ENCODE measurements at regions of chr1 and their contacts with region 1.

Region 1: DNA sequence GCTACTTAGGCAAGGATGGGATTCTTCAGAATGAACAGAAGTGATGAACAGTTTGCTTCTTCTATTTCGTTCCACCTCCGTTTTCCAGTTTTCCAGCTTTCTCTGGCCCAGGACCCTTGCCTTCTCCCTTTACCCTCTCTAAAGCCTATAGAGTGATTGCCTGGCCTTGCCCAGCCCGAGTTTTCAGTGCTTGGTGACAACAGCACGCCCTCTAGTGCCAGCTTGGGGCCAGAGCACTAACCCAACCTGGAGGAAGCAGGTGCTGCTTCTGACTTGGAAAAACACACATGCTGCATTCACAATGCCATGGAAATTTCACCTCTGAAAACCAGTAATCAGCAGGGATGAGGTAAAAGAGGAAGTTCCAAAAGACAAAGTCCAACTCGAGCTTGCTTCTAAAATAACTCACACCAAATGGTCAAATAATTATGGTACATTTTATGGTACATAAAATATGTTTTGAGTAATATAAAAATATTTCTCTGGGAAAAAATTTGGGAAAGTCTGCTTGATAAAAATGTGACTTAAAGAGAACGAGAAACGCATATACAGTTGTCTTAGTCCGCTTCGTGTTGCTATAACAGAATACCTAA is 26.1 kb downstream of the UBE2T start:
- DNase-seq: peak; percentile 63
- H3K4me3 Mint-ChIP-seq: no peak overlapping the region
- H3K27ac Mint-ChIP-seq: no peak overlapping the region
- H3K4me1 Mint-ChIP-seq: peaks cover 4% of the 10 kb centered on the region
- H3K27me3 Mint-ChIP-seq: peaks cover 14% of the 10 kb centered on the region

Region 2: GRCh38 chr1:201774224-201774982 is 541.3 kb before region 1 on chr1:
- intact Hi-C with region 1: no loop called
- DNase-seq: no peak
- H3K4me3 Mint-ChIP-seq: no peak overlapping the region
- H3K27ac Mint-ChIP-seq: no peak overlapping the region
- H3K4me1 Mint-ChIP-seq: no peaks in the 10 kb centered on the region
- H3K27me3 Mint-ChIP-seq: peaks cover 11% of the 10 kb centered on the region

Region 3: GRCh38 chr1:201916649-201917249 is 398.9 kb before region 1 on chr1:
- intact Hi-C with region 1: no loop called
- DNase-seq: no peak
- H3K4me3 Mint-ChIP-seq: no peak overlapping the region
- H3K27ac Mint-ChIP-seq: no peak overlapping the region
- H3K4me1 Mint-ChIP-seq: no peaks in the 10 kb centered on the region
- H3K27me3 Mint-ChIP-seq: peaks cover 11% of the 10 kb centered on the region

Region 4: DNA sequence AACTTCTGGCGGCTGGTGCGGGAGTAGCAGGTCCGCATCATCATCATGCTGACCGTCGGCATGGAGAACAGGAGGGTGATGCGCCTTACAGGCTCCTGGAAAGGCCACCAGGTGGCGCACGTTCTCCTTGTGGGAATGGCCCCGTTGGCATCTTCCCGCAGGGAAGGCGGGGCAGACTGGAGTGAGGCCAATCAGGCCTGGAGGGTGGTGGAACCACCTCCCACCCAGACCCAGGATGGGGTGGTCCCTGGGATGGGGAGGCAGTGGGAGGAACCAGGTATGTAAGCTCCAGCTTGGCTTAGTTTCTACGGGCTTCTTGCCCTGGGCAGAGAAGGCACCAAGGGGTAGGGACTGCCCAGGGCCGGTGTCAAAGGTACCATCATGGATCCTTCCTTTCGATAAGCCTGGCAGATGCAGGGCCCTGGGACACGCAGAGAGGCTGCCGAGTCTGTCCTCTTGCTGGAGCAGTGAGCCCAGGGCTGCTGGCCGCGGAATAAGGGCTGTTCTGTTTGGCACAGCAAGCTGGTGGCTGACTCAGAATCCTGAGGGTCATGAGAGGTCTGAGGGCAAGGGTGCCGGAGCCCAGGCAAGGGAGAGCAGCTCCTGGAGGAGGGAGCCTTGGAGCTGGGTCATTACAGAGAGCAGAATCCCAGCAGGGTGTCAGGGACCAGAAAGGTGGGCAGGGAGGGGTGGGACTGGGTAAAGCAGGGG is 130.8 kb before region 1 on chr1:
- intact Hi-C with region 1: loop called (anchors 1 kb)
- DNase-seq: peak; percentile 48
- H3K4me3 Mint-ChIP-seq: no peak overlapping the region
- H3K27ac Mint-ChIP-seq: no peak overlapping the region
- H3K4me1 Mint-ChIP-seq: peaks cover 24% of the 10 kb centered on the region
- H3K27me3 Mint-ChIP-seq: peaks cover 5% of the 10 kb centered on the region

Region 5: DNA sequence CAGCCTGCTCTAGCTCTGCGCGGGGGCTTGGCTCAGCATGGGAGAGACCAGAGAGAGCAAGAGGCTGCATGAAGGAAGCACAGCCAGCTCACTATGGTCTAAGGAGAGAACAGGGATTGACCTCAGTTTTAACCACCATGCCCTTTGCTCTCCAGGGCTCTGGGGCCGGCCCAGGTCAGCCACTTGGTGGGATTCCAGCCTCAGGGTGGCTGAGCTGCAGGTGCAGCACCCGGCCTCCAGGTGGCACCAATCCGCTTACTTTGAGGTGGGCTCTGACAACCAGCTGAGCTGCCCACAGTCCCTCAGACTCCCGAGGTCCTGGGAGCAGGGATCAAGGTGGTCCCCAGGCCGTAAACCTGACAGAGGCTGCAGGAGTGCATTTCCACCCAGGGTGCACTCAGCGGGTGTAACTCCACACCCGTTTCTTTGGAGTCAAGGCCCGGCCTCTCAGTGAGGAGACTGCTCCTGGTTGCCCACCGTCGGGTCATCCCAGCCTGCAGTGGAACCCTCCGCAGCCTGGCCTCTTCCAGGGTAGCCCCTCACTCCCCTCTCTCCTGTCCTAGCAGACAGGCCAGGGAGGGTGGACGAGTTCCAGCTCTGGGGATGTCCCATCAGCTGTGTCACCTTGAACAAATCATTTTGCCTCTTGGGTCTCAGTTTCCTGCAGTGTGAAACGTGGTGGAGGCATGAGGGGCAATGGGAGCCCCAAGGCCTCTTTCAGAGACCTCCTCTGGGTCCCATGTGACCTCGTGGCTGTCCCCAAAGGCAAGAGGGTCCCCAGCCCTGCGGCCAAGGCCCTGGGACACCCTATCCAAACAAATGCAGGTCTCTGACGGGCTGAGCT is 122.7 kb before region 1 on chr1:
- intact Hi-C with region 1: loop called (anchors 1 kb)
- DNase-seq: peak; percentile 31
- H3K4me3 Mint-ChIP-seq: no peak overlapping the region
- H3K27ac Mint-ChIP-seq: no peak overlapping the region
- H3K4me1 Mint-ChIP-seq: no peaks in the 10 kb centered on the region
- H3K27me3 Mint-ChIP-seq: peaks cover 42% of the 10 kb centered on the region

Region 6: GRCh38 chr1:202235856-202236837 is 79.5 kb before region 1 on chr1:
- intact Hi-C with region 1: loop called (anchors 1 kb)
- DNase-seq: peak; percentile 47
- H3K4me3 Mint-ChIP-seq: no peak overlapping the region
- H3K27ac Mint-ChIP-seq: no peak overlapping the region
- H3K4me1 Mint-ChIP-seq: peaks cover 7% of the 10 kb centered on the region
- H3K27me3 Mint-ChIP-seq: peaks cover 18% of the 10 kb centered on the region

Region 7: DNA sequence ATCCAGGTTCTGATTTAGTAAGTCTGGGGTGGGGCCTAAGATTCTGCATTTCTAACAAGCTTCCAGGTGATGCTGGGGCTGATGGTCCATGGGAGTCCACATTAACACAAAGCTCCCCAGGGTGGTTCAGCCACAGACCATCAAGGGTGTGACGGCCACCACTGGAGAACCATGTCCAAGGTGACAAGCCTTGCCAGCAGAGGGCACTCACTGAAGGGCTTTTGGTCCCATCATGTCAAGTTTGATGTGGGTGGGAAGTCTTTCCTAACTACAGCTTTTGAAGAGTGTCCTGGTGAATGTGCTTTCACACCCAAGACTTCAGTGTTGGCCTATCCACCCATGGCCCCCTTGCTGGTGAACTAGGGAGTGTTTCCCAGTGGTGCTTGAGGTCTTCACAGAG is 41.1 kb before region 1 on chr1:
- intact Hi-C with region 1: loop called (anchors 1 kb)
- DNase-seq: peak; percentile 17
- H3K4me3 Mint-ChIP-seq: no peak overlapping the region
- H3K27ac Mint-ChIP-seq: no peak overlapping the region
- H3K4me1 Mint-ChIP-seq: no peaks in the 10 kb centered on the region
- H3K27me3 Mint-ChIP-seq: peaks cover 18% of the 10 kb centered on the region

Measured in activated T-helper 1 cell treated with anti-CD3 and anti-CD28 coated beads, Interleukin-12 subunit alpha, Interleukin-12 subunit beta, Interleukin-2, Interleukin-4 antibody, amounts not matched to agents 30 ng/mL and 10 ng/mL and 1 ng/mL, durations not matched to agents 14 hours and 24 hours and 36 hours (primary cell).